Mammary epithelial cell (primary cell): ENCODE measurements at regions of chr1 and their contacts with region 1.

Region 1: GRCh38 chr1:9269078-9269501 is 23.6 kb upstream of the SPSB1 start:
- DNase-seq: peak; percentile 15
- H3K4me3 ChIP-seq: no peak overlapping the region
- H3K27ac ChIP-seq: no peak overlapping the region
- H3K4me1 ChIP-seq: no peaks in the 10 kb centered on the region
- H3K27me3 ChIP-seq: no peaks in the 10 kb centered on the region
- CTCF ChIP-seq: no peak

Region 2: DNA sequence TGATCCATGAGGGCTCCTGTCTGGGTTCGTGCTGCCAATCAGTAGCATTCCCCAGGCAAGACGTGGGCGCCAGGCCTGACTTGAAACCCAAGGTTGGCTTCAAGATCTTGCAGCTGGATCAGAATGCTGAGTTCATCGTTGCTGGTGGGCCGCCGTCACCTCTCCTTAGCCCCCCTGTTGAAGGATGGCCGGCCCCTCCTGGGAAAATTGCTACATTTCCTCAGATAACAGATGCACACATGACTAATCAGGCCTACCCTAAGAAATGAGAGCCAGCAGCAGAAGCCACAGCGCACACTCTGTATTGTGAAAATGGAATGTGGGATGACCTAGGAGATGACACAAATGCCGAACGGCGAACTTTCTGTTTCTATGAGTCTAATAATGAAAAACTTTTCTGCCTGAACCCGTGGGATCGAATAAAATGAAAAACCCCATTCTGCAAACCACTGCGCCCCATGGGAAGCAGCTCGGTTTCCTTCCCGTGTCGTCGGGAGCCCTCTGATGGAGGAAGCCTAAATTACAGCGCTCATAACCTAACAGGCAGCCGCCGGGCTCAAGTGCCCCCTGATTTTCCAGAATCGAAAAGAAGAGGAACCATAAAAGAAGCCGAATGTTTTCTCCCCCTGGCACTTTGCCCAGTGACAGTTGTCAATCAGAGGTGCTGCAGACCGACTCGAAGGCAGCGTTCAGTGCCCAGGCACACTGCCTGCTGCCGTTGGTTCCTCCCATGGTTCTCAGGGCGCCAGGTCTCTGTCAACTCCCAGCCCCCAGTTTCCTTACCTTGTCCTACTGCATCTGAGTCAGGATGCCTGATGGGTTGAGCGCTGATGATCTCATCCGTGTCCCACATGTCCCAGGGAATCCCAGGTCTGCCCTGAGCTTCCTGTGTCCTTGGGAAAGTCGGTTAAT is 72.7 kb before region 1 on chr1:
- CTCF ChIA-PET with region 1: no interaction called
- dilution Hi-C with region 1: no loop called
- in situ Hi-C with region 1: no loop called
- intact Hi-C with region 1: no loop called
- DNase-seq: peak; percentile 66
- H3K4me3 ChIP-seq: no peak overlapping the region
- H3K27ac ChIP-seq: no peak overlapping the region
- H3K4me1 ChIP-seq: peaks cover 35% of the 10 kb centered on the region
- H3K27me3 ChIP-seq: no peaks in the 10 kb centered on the region
- CTCF ChIP-seq: peak; percentile 67 to 74

Region 3: GRCh38 chr1:9317591-9318417 is 48.7 kb after region 1 on chr1:
- CTCF ChIA-PET with region 1: no interaction called
- dilution Hi-C with region 1: no loop called
- in situ Hi-C with region 1: no loop called
- intact Hi-C with region 1: loop called (anchors 10 kb)
- DNase-seq: no peak
- H3K4me3 ChIP-seq: no peak overlapping the region
- H3K27ac ChIP-seq: no peak overlapping the region
- H3K4me1 ChIP-seq: peaks cover 15% of the 10 kb centered on the region
- H3K27me3 ChIP-seq: no peaks in the 10 kb centered on the region
- CTCF ChIP-seq: no peak

Region 4: DNA sequence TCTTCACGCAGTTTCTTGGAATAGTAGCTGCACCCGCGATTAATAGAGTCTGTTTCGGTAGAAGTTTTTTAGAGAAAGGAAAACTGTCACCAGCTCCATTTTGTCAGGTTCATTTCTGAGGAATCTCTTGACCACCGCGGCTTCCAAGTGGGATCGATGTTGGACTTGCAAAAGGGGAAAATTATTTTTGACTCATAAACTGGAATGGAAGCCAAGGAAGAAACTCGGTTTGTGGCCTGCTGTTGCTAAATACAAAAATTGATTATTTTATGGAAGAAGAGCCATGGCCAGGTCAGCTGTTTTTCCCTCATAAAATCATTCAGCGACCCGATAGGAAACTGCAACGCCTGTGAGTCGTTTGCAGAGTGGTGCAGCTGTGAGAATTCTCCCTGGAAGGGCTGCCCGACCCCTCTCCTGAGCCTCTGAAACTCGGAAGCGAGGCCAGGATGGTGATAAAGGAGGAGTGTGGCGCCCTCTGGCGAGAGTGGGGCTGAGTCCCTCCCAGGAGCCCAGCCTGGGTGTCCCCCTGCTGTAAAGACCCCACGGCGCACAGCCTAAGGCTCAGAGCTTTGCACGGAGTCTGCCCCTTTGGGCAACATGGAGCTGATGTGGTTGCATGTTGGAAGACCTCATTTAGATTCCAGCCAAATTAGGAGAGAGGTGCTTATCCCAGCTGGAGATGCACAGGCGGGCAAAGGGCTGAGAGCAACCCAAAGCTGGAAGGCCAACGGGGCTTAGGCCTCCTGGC is 186.6 kb after region 1 on chr1:
- CTCF ChIA-PET with region 1: no interaction called
- dilution Hi-C with region 1: no loop called
- in situ Hi-C with region 1: no loop called
- intact Hi-C with region 1: loop called (anchors 1 kb)
- DNase-seq: peak; percentile 24
- H3K4me3 ChIP-seq: no peak overlapping the region
- H3K27ac ChIP-seq: no peak overlapping the region
- H3K4me1 ChIP-seq: peaks cover 4% of the 10 kb centered on the region
- H3K27me3 ChIP-seq: no peaks in the 10 kb centered on the region
- CTCF ChIP-seq: peak; percentile 61 to 91